Activated CD8-positive, alpha-beta T cell treated with anti-CD3 and anti-CD28 coated beads for 36 hours (primary cell): ENCODE measurements at regions of chr1 and their contacts with region 1.

Region 1: DNA sequence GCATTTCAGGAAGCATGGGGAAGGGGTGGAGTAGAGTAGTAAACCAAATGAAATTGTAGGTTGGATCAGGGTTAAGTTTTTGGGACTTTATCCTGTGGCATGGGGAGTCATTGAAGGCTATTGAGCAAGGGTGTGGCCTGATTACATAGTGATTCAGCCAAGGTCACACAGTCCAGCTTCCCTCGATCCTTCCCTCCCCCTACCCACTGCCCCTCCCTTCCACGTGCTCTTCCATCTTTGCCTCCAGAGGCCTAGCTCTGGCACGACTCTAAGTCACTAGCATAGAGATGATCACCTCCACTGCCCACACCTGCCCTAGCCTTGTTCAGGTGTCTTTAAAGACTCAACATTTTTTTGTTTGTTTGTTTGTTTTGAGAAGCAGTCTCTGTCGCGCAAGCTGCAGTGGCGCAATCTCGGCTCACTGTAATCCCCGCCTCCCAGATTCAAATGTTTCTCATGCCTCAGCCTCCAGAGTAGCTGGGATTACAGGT is 37.2 kb upstream of the SLC9A1 start:
- DNase-seq: no peak
- ATAC-seq: no peak
- H3K4me3 Mint-ChIP-seq: no peak overlapping the region
- H3K27ac Mint-ChIP-seq: no peak overlapping the region
- H3K4me1 Mint-ChIP-seq: no peaks in the 10 kb centered on the region
- H3K27me3 Mint-ChIP-seq: no peaks in the 10 kb centered on the region
- CTCF ChIP-seq: no peak

Region 2: DNA sequence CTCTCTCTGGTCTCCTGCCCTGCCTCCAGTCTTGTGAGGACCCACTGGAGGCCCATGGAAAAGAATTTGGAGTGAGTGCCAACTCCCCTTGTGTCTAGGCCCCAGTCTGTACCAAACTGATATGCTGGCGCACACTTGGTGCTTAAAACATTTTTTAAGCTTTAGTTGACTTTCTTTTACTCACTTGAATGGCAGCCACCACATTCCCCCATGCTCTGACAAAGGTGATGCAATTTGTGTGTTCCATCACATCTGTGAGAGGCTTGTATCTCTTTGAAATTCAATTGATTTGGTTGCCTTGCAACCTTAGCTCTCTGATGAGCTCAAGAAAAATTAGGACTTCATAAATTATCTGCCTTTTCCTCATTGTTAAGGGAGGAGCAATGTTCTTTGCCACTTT is 11.9 kb after region 1 on chr1:
- CTCF ChIA-PET with region 1: no interaction called
- POLR2A ChIA-PET with region 1: no interaction called
- intact Hi-C with region 1: no loop called
- DNase-seq: no peak
- ATAC-seq: no peak
- H3K4me3 Mint-ChIP-seq: no peak overlapping the region
- H3K27ac Mint-ChIP-seq: no peak overlapping the region
- H3K4me1 Mint-ChIP-seq: no peaks in the 10 kb centered on the region
- H3K27me3 Mint-ChIP-seq: no peaks in the 10 kb centered on the region
- CTCF ChIP-seq: no peak

Region 3: DNA sequence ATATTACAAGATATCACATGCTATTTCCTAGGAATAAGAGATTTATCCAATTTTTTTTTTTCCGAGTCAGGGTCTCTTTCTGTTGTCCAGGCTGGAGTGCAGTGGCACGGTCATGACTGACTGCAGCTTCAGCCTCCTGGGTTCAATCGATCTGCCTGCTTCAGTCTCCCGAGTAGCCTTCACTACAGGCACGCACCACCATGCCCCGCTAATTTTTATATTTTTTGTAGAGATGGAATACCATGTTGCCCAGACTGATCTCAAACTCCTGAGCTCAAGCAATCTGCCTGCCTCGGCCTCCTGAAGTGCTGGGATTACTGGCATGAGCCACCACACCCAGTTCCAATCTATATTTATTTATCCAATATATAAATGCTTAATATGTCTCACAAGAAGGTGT is 24.4 kb after region 1 on chr1:
- CTCF ChIA-PET with region 1: interaction called, 11 read pairs
- POLR2A ChIA-PET with region 1: no interaction called
- intact Hi-C with region 1: no loop called
- DNase-seq: no peak
- ATAC-seq: no peak
- H3K4me3 Mint-ChIP-seq: no peak overlapping the region
- H3K27ac Mint-ChIP-seq: no peak overlapping the region
- H3K4me1 Mint-ChIP-seq: no peaks in the 10 kb centered on the region
- H3K27me3 Mint-ChIP-seq: no peaks in the 10 kb centered on the region
- CTCF ChIP-seq: no peak

Region 4: GRCh38 chr1:27225621-27226020 is 33.5 kb after region 1 on chr1:
- CTCF ChIA-PET with region 1: interaction called, 11 read pairs
- POLR2A ChIA-PET with region 1: no interaction called
- intact Hi-C with region 1: no loop called
- DNase-seq: no peak
- ATAC-seq: no peak
- H3K4me3 Mint-ChIP-seq: no peak overlapping the region
- H3K27ac Mint-ChIP-seq: no peak overlapping the region
- H3K4me1 Mint-ChIP-seq: no peaks in the 10 kb centered on the region
- H3K27me3 Mint-ChIP-seq: no peaks in the 10 kb centered on the region
- CTCF ChIP-seq: no peak

Region 5: GRCh38 chr1:27713139-27713725 is 521.1 kb after region 1 on chr1:
- CTCF ChIA-PET with region 1: no interaction called
- POLR2A ChIA-PET with region 1: no interaction called
- intact Hi-C with region 1: no loop called
- DNase-seq: no peak
- ATAC-seq: no peak
- H3K4me3 Mint-ChIP-seq: no peak overlapping the region
- H3K27ac Mint-ChIP-seq: no peak overlapping the region
- H3K4me1 Mint-ChIP-seq: no peaks in the 10 kb centered on the region
- H3K27me3 Mint-ChIP-seq: peaks cover 13% of the 10 kb centered on the region
- CTCF ChIP-seq: no peak